ENCODE measurements at regions of chr12 and their contacts with region 1.

Region 1: DNA sequence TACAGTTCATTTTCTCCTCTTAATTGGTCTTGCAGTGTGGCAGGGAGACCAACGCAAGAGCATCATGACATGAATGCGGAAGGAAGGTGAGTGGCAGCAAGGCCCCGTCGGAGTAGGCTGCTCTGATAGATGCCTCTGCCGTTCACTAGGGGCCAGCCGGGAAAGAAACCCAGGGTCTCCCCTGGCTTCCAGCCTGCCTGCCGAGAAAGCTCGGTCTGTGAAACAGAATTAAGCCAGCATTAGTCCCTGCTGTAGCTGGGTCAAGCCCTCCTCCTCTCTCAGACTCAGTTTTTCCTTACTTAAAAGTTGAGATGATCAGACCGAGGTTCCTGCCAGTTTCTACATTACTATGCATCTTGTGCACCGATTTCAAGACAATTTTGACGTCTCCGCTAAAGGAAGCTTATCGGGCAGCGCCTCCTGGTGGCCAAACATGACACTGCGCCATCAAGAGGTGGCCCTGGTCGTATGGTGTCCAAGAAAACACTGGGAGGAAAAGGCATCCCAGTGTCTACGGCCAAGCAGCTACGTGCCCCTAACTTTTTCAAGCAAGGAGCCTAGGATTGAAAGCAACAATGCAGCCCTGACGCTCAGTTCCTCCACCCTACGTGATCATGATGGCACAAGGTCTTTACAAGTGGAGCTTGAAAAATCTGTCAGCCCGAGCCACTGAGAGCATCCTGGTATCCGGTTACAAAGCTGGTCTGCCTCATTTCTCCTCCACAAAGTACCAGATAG is 131.6 kb downstream of the KSR2 start:
- DNase-seq: peak; percentile 92
- ATAC-seq: peak; percentile 88
- H3K4me3 Mint-ChIP-seq: 0 out of 2 replicates have a peak overlapping the region, but pooled peaks have one; percentile 14
- H3K27ac Mint-ChIP-seq: no peak overlapping the region; the same call in 1 of the 2 replicates
- H3K4me1 Mint-ChIP-seq: peaks cover 27% of the 10 kb centered on the region
- H3K27me3 Mint-ChIP-seq: no peaks in the 10 kb centered on the region
- CTCF ChIP-seq: peak; percentile 99

Region 2: GRCh38 chr12:117587631-117588287 is 249.4 kb before region 1 on chr12:
- CTCF ChIA-PET with region 1: interaction called, 17 read pairs
- POLR2A ChIA-PET with region 1: no interaction called
- DNase-seq: peak; percentile 81
- ATAC-seq: peak; percentile 86
- H3K4me3 Mint-ChIP-seq: no peak overlapping the region
- H3K27ac Mint-ChIP-seq: no peak overlapping the region
- H3K4me1 Mint-ChIP-seq: peaks cover 39% of the 10 kb centered on the region
- H3K27me3 Mint-ChIP-seq: no peaks in the 10 kb centered on the region
- CTCF ChIP-seq: peak; percentile 91

Region 3: GRCh38 chr12:117671734-117672133 is 165.4 kb before region 1 on chr12:
- CTCF ChIA-PET with region 1: interaction called, 46 read pairs
- POLR2A ChIA-PET with region 1: no interaction called
- DNase-seq: peak; percentile 91
- ATAC-seq: peak; percentile 92
- H3K4me3 Mint-ChIP-seq: no peak overlapping the region
- H3K27ac Mint-ChIP-seq: 0 out of 2 replicates have a peak overlapping the region, but pooled peaks have one; percentile 32
- H3K4me1 Mint-ChIP-seq: peaks cover 8% of the 10 kb centered on the region
- H3K27me3 Mint-ChIP-seq: no peaks in the 10 kb centered on the region; the same call in 1 of the 2 replicates
- CTCF ChIP-seq: peak; percentile 53

Region 4: GRCh38 chr12:117695956-117696355 is 141.2 kb before region 1 on chr12:
- CTCF ChIA-PET with region 1: interaction called, 13 read pairs
- POLR2A ChIA-PET with region 1: no interaction called
- DNase-seq: no peak
- ATAC-seq: no peak
- H3K4me3 Mint-ChIP-seq: no peak overlapping the region
- H3K27ac Mint-ChIP-seq: no peak overlapping the region
- H3K4me1 Mint-ChIP-seq: peaks cover 5% of the 10 kb centered on the region
- H3K27me3 Mint-ChIP-seq: no peaks in the 10 kb centered on the region; the same call in none of the 2 replicates
- CTCF ChIP-seq: no peak

Region 5: GRCh38 chr12:117818400-117818799 is 18.8 kb before region 1 on chr12:
- CTCF ChIA-PET with region 1: interaction called, 25 read pairs
- POLR2A ChIA-PET with region 1: no interaction called
- DNase-seq: no peak
- ATAC-seq: no peak
- H3K4me3 Mint-ChIP-seq: no peak overlapping the region
- H3K27ac Mint-ChIP-seq: no peak overlapping the region
- H3K4me1 Mint-ChIP-seq: peaks cover 13% of the 10 kb centered on the region
- H3K27me3 Mint-ChIP-seq: no peaks in the 10 kb centered on the region
- CTCF ChIP-seq: no peak

Region 6: DNA sequence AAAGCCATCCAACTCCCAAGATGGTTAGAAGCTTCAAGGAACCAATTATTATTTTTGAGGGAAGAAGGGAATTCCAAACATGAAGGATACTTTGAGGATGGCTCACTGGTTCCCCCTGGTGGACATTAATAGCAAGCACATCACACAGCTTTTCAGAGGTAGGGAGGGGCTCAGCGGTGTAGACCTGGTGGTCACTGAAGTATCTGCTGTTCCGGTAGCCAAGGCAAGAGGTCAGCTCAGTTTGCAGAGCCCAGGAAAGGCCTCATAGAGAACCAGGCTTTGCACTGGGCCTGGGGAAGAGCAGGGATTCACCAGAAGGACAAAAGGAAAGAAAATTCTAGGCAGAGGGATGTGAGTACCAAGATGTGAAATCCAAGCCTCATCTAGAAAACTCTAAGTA is 12.9 kb after region 1 on chr12:
- CTCF ChIA-PET with region 1: interaction called, 72 read pairs
- POLR2A ChIA-PET with region 1: no interaction called
- DNase-seq: peak; percentile 45
- ATAC-seq: peak; percentile 88
- H3K4me3 Mint-ChIP-seq: no peak overlapping the region
- H3K27ac Mint-ChIP-seq: no peak overlapping the region
- H3K4me1 Mint-ChIP-seq: peaks cover 28% of the 10 kb centered on the region
- H3K27me3 Mint-ChIP-seq: no peaks in the 10 kb centered on the region
- CTCF ChIP-seq: peak; percentile 92

Region 7: GRCh38 chr12:117869551-117869950 is 32.4 kb after region 1 on chr12:
- CTCF ChIA-PET with region 1: no interaction called
- POLR2A ChIA-PET with region 1: no interaction called
- DNase-seq: no peak
- ATAC-seq: no peak
- H3K4me3 Mint-ChIP-seq: no peak overlapping the region
- H3K27ac Mint-ChIP-seq: no peak overlapping the region
- H3K4me1 Mint-ChIP-seq: no peaks in the 10 kb centered on the region
- H3K27me3 Mint-ChIP-seq: no peaks in the 10 kb centered on the region
- CTCF ChIP-seq: no peak

Measured in WTC11 (cell line).